Esophagus muscularis mucosa (tissue), 4 donors: ENCODE measurements at regions of chr1 and their contacts with region 1.

Region 1: GRCh38 chr1:2578758-2579118 is 7.8 kb upstream of the PRXL2B start:
- DNase-seq: no peak
- H3K4me3 ChIP-seq: no peak overlapping the region
- H3K27ac ChIP-seq: peak overlapping the region; percentile 44 to 77 (median 70)
- H3K4me1 ChIP-seq: peaks cover 14 to 21% (median 20%) of the 10 kb centered on the region in 4 donors
- H3K27me3 ChIP-seq: peaks cover 0 to 45% (median 7%) of the 10 kb centered on the region in 4 donors
- CTCF ChIP-seq: no peak
- EP300 ChIP-seq: no peak
- POLR2A ChIP-seq: no peak

Region 2: GRCh38 chr1:2314803-2315673 is 263.7 kb before region 1 on chr1:
- intact Hi-C with region 1: no loop called
- DNase-seq: no peak
- H3K4me3 ChIP-seq: peak overlapping the region; percentile 64 to 86 (median 82)
- H3K27ac ChIP-seq: peak overlapping the region; percentile 93 to 98 (median 95)
- H3K4me1 ChIP-seq: peaks cover 64 to 100% (median 98%) of the 10 kb centered on the region in 4 donors
- H3K27me3 ChIP-seq: no peaks in the 10 kb centered on the region
- CTCF ChIP-seq: peak; percentile 76 to 99 (median 99)
- EP300 ChIP-seq: no peak
- POLR2A ChIP-seq: no peak

Region 3: GRCh38 chr1:2556277-2556677 is 22.5 kb before region 1 on chr1 and contains the start of gene TNFRSF14:
- intact Hi-C with region 1: loop called (anchors 2 kb)
- DNase-seq: no peak
- H3K4me3 ChIP-seq: peak within 1 kb of the TSS; percentile 62 to 83 (median 71)
- H3K27ac ChIP-seq: peak within 1 kb of the TSS; percentile 81 to 90 (median 86)
- H3K4me1 ChIP-seq: peaks cover 29 to 64% (median 49%) of the 10 kb centered on the region in 4 donors
- H3K27me3 ChIP-seq: peaks cover 0 to 3% (median 0%) of the 10 kb centered on the region in 4 donors
- CTCF ChIP-seq: peak in 1 of 3 experiments; percentile 19
- EP300 ChIP-seq: no peak
- POLR2A ChIP-seq: no peak
- total RNA-seq, gene TNFRSF14: 26.2 to 49.2 (median 42.5) TPM

Region 4: DNA sequence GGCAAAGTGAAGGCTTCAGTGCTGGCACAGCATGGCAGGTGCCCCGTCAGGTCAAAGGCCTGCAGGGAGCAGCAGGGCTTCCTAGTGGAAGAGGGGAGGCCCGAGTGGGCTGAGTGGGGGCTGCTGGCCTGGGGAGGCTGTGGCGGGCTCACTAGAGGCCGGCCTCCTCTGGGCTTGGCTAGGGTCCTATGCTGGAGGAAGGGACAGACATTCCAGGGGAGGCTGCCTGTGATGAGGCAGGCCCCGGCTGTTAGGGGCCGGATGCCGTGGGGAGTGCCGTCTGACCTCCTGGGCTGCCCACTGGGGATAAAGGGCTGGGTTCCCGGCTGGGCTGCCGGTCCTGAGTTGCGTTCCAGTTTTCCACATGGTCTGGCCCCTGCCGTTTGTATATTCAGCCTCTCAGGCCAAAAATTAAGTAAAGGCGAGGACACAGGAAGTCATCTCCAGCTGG is 28.9 kb after region 1 on chr1:
- intact Hi-C with region 1: no loop called
- DNase-seq: no peak
- H3K4me3 ChIP-seq: no peak overlapping the region
- H3K27ac ChIP-seq: peak overlapping the region in 1 of 4 donors; percentile 14
- H3K4me1 ChIP-seq: peaks cover 12 to 21% (median 17%) of the 10 kb centered on the region in 4 donors
- H3K27me3 ChIP-seq: peaks cover 0 to 84% (median 3%) of the 10 kb centered on the region in 4 donors
- CTCF ChIP-seq: no peak
- EP300 ChIP-seq: no peak
- POLR2A ChIP-seq: no peak